ENCODE measurements at regions of chr15 and their contacts with region 1.

Region 1: GRCh38 chr15:41774062-41774881 is at the start of gene MAPKBP1:
- DNase-seq: peak; percentile 97 to 99 (median 98)
- H3K4me3 ChIP-seq: peak within 1 kb of the TSS; percentile 67 to 83
- H3K4me3 Mint-ChIP-seq: peak within 1 kb of the TSS; percentile 91 to 99 (median 96)
- H3K27ac ChIP-seq: peak within 1 kb of the TSS; percentile 75
- H3K27ac Mint-ChIP-seq: peak within 1 kb of the TSS; percentile 95 to 98 (median 97)
- H3K4me1 ChIP-seq: peaks cover 57% of the 10 kb centered on the region
- H3K4me1 Mint-ChIP-seq: peaks cover 46 to 65% (median 53%) of the 10 kb centered on the region in 4 donors
- H3K27me3 ChIP-seq: no peaks in the 10 kb centered on the region
- H3K27me3 Mint-ChIP-seq: no peaks in the 10 kb centered on the region
- total RNA-seq, gene MAPKBP1: 39.7 to 42.6 TPM

Region 2: GRCh38 chr15:41394924-41395323 is 379.3 kb before region 1 on chr15:
- CTCF ChIA-PET with region 1: no interaction called
- POLR2A ChIA-PET with region 1: no interaction called
- intact Hi-C with region 1: no loop called
- DNase-seq: no peak
- H3K4me3 ChIP-seq: no peak overlapping the region
- H3K4me3 Mint-ChIP-seq: peak overlapping the region in 1 of 8 donors; percentile 15
- H3K27ac ChIP-seq: no peak overlapping the region
- H3K27ac Mint-ChIP-seq: peak overlapping the region in 4 of 7 donors; percentile 1 to 87 (median 50)
- H3K4me1 ChIP-seq: peaks cover 11% of the 10 kb centered on the region
- H3K4me1 Mint-ChIP-seq: peaks cover 12 to 21% (median 19%) of the 10 kb centered on the region in 4 donors
- H3K27me3 ChIP-seq: no peaks in the 10 kb centered on the region
- H3K27me3 Mint-ChIP-seq: no peaks in the 10 kb centered on the region

Region 3: DNA sequence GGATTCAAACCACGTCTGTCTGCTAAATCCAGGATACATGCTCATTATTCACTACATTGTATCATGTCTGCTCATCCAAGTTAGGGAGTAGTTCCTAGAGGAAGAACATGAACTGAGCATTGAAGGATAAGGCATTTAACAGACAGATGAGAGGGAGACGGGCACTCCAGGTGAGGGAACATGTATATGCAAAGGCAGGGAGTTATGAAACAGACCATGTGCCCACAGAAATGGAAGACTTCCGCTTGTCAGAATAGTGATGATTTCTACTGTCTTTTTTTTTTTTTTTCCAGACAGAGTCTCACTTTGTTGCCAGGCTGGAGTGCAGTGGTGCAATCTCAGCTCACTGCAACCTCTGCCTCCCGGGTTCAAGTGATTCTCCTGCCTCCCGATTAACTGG is 366.9 kb before region 1 on chr15:
- CTCF ChIA-PET with region 1: no interaction called
- POLR2A ChIA-PET with region 1: no interaction called
- intact Hi-C with region 1: no loop called
- DNase-seq: no peak
- H3K4me3 ChIP-seq: no peak overlapping the region
- H3K4me3 Mint-ChIP-seq: no peak overlapping the region
- H3K27ac ChIP-seq: no peak overlapping the region
- H3K27ac Mint-ChIP-seq: no peak overlapping the region
- H3K4me1 ChIP-seq: peaks cover 6% of the 10 kb centered on the region
- H3K4me1 Mint-ChIP-seq: peaks cover 5 to 22% (median 10%) of the 10 kb centered on the region in 4 donors
- H3K27me3 ChIP-seq: no peaks in the 10 kb centered on the region
- H3K27me3 Mint-ChIP-seq: no peaks in the 10 kb centered on the region

Region 4: GRCh38 chr15:41557673-41558399 is 216.4 kb before region 1 on chr15:
- CTCF ChIA-PET with region 1: interaction called, 9 read pairs
- POLR2A ChIA-PET with region 1: interaction called, 8 read pairs
- intact Hi-C with region 1: loop called (anchors 1 kb)
- DNase-seq: peak; percentile 80 to 87 (median 84)
- H3K4me3 ChIP-seq: peak overlapping the region in 1 of 2 donors; percentile 32
- H3K4me3 Mint-ChIP-seq: peak overlapping the region; percentile 82 to 98 (median 89)
- H3K27ac ChIP-seq: peak overlapping the region; percentile 17
- H3K27ac Mint-ChIP-seq: peak overlapping the region; percentile 90 to 98 (median 93)
- H3K4me1 ChIP-seq: peaks cover 19% of the 10 kb centered on the region
- H3K4me1 Mint-ChIP-seq: peaks cover 8 to 30% (median 24%) of the 10 kb centered on the region in 4 donors
- H3K27me3 ChIP-seq: peaks cover 4% of the 10 kb centered on the region
- H3K27me3 Mint-ChIP-seq: peaks cover 0 to 9% of the 10 kb centered on the region in 2 donors

Region 5: DNA sequence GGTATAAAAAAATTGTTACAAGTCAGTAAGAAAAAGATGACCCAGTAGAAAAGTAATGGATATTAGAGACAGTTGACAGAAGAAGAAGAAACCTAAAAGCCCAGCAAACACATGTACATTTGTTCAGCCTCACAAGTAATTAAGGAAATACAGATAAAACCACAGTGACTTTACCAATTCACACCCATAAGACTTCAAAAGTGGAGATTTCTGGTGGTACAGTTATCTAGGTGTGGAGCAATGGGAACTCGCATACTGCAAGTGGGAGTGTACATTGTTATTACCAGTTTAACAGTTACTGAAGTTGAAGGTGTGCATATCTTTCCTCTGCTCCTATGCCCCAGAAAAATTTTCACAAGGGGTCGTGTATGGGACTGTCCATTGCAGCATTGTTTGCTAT is 18.1 kb before region 1 on chr15:
- CTCF ChIA-PET with region 1: interaction called, 12 read pairs
- POLR2A ChIA-PET with region 1: no interaction called
- intact Hi-C with region 1: no loop called
- DNase-seq: no peak
- H3K4me3 ChIP-seq: no peak overlapping the region
- H3K4me3 Mint-ChIP-seq: no peak overlapping the region
- H3K27ac ChIP-seq: no peak overlapping the region
- H3K27ac Mint-ChIP-seq: peak overlapping the region in 1 of 7 donors; percentile 68
- H3K4me1 ChIP-seq: no peaks in the 10 kb centered on the region
- H3K4me1 Mint-ChIP-seq: peaks cover 0 to 4% (median under 1%) of the 10 kb centered on the region in 4 donors
- H3K27me3 ChIP-seq: no peaks in the 10 kb centered on the region
- H3K27me3 Mint-ChIP-seq: no peaks in the 10 kb centered on the region

Region 6: DNA sequence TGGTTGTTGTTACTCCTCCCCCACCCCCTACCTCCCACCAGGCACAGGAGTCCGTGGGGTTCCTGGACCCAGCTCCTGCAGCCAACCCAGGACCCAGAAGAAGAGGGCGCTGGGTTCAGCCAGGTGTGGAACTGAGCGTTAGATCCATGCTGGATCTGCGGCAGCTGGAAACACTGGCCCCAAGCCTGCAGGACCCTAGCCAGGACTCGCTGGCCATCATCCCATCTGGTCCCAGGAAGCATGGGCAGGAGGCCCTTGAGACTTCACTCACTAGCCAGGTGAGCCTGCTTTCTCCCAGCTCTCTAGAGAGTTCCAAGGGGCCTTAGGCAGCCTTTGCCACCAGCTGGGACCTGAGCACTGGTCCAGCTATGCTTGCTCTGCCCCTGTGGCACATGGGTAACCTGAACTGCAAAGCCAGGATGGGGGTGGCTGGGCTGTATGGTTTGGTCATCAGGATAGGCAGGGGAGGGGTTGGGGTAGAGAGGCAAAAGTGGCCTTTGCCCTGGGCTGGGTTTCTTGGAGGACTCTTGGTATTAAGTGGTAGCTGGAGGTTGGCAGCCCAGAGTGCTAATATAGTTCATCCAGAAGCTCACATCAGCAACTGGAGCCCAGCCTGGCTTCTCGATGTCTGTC is 46.6 kb after region 1 on chr15:
- CTCF ChIA-PET with region 1: interaction called, 11 read pairs
- POLR2A ChIA-PET with region 1: no interaction called
- intact Hi-C with region 1: no loop called
- DNase-seq: no peak
- H3K4me3 ChIP-seq: no peak overlapping the region
- H3K4me3 Mint-ChIP-seq: no peak overlapping the region
- H3K27ac ChIP-seq: no peak overlapping the region
- H3K27ac Mint-ChIP-seq: no peak overlapping the region
- H3K4me1 ChIP-seq: no peaks in the 10 kb centered on the region
- H3K4me1 Mint-ChIP-seq: no peaks in the 10 kb centered on the region
- H3K27me3 ChIP-seq: no peaks in the 10 kb centered on the region
- H3K27me3 Mint-ChIP-seq: no peaks in the 10 kb centered on the region

Region 7: DNA sequence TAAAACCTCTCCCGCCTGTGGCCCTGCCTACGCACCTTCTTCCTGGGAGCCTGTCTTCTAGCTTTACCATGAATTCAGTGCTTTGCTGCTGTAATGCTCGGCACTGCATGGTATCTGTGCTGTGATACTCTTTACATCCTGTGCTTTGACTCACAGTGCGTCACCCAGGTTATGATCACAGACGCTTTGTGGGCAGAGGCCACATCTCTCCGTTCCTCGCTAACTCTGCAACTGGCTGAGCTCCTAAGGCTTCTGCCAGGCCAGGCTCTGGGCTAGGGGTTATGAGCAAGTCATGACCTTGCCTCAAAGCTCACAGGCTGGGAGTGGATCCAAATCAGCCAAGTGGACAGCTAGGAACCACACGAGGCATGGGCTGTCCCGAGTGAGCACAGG is 96.4 kb after region 1 on chr15:
- CTCF ChIA-PET with region 1: interaction called, 10 read pairs
- POLR2A ChIA-PET with region 1: no interaction called
- intact Hi-C with region 1: no loop called
- DNase-seq: peak; percentile 67 to 79 (median 71)
- H3K4me3 ChIP-seq: no peak overlapping the region
- H3K4me3 Mint-ChIP-seq: peak overlapping the region in 7 of 8 donors; percentile 12 to 82 (median 64)
- H3K27ac ChIP-seq: no peak overlapping the region
- H3K27ac Mint-ChIP-seq: peak overlapping the region; percentile 13 to 98 (median 96)
- H3K4me1 ChIP-seq: peaks cover 11% of the 10 kb centered on the region
- H3K4me1 Mint-ChIP-seq: peaks cover 8 to 10% (median 9%) of the 10 kb centered on the region in 4 donors
- H3K27me3 ChIP-seq: no peaks in the 10 kb centered on the region
- H3K27me3 Mint-ChIP-seq: no peaks in the 10 kb centered on the region

Region 8: GRCh38 chr15:41936649-41937567 is 162.6 kb after region 1 on chr15:
- CTCF ChIA-PET with region 1: interaction called, 70 read pairs
- POLR2A ChIA-PET with region 1: interaction called, 26 read pairs
- intact Hi-C with region 1: loop called (anchors 1 kb)
- DNase-seq: peak; percentile 80 to 95 (median 81)
- H3K4me3 ChIP-seq: peak overlapping the region in 1 of 2 donors; percentile 12
- H3K4me3 Mint-ChIP-seq: peak overlapping the region; percentile 77 to 95 (median 89)
- H3K27ac ChIP-seq: peak overlapping the region; percentile 97
- H3K27ac Mint-ChIP-seq: peak overlapping the region; percentile 94 to 100 (median 100)
- H3K4me1 ChIP-seq: peaks cover 75% of the 10 kb centered on the region
- H3K4me1 Mint-ChIP-seq: peaks cover 46 to 76% (median 67%) of the 10 kb centered on the region in 4 donors
- H3K27me3 ChIP-seq: no peaks in the 10 kb centered on the region
- H3K27me3 Mint-ChIP-seq: no peaks in the 10 kb centered on the region

Region 9: DNA sequence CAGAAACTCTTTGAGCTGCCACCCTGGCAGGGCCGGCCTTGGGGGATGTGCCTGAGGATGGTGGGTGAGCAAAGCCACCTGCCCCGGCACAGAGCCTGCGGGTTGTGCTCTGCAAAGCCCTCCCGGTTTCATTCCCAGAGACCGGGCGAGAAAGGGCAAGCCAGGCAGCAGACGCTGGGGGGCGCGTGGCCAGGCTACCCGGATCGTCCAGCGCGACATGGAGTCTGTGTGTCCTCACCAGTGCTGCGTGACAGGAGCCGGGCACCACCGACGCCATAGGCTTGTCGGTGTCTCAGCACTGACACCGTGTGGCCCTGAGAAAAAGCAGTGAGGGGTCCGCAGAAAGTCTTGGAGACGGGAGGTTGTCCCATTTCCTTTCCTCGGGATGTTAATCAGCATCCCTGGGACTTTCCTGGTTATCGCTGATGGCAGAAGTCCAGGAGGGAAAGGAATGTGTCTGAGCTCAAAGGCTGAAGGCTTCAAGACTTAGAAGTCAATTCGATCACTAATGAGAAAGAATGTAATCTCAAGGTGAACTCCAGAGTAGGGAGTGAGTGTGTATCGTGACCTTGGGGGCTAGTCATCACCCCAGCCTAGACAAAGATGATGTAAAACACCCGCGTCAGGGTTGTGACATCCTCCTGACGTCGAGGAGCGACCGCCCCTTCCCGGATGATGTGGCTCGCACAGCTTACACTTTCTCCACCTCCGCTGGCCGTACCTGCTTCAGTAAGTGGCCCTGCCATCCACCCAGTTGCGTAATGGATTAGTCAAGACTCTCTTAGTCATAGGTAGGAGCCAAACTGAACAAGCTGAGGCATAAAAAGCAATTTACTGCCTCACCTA is 282.9 kb after region 1 on chr15:
- CTCF ChIA-PET with region 1: interaction called, 21 read pairs
- POLR2A ChIA-PET with region 1: no interaction called
- intact Hi-C with region 1: loop called (anchors 1 kb)
- DNase-seq: peak; percentile 22 to 83 (median 58)
- H3K4me3 ChIP-seq: peak overlapping the region in 1 of 2 donors; percentile 11
- H3K4me3 Mint-ChIP-seq: peak overlapping the region; percentile 18 to 68 (median 62)
- H3K27ac ChIP-seq: no peak overlapping the region
- H3K27ac Mint-ChIP-seq: peak overlapping the region; percentile 68 to 91 (median 79)
- H3K4me1 ChIP-seq: peaks cover 13% of the 10 kb centered on the region
- H3K4me1 Mint-ChIP-seq: peaks cover 2 to 26% (median 8%) of the 10 kb centered on the region in 4 donors
- H3K27me3 ChIP-seq: no peaks in the 10 kb centered on the region
- H3K27me3 Mint-ChIP-seq: peaks cover 14 to 20% of the 10 kb centered on the region in 2 donors

Measured in CD4-positive, alpha-beta memory T cell (primary cell).